PC-9 (cell line): ENCODE measurements at regions of chr7 and their contacts with region 1.

Region 1: DNA sequence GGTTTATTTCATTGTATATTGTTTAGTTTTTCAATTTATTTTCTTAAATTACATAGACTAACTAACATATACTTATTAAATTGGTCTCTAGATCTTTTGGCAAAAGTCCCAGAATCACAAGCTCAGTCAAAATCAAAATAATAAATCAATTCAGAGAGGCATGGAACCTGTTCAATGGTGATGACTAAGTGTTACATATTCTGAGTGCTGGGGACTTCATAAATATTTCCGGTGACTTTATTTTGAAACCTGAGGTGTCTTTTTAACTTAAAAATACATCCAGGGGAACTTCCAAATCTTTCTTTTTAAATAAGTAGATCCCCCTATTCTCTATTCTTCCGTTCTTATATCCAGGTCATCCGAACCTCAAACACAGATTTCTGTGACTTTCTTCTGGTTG is 89.6 kb upstream of the ZNF804B start:
- DNase-seq: no peak
- H3K4me3 ChIP-seq: no peak overlapping the region
- H3K27ac ChIP-seq: no peak overlapping the region
- H3K4me1 ChIP-seq: peaks cover 11% of the 10 kb centered on the region
- H3K27me3 ChIP-seq: no peaks in the 10 kb centered on the region
- CTCF ChIP-seq: no peak

Region 2: DNA sequence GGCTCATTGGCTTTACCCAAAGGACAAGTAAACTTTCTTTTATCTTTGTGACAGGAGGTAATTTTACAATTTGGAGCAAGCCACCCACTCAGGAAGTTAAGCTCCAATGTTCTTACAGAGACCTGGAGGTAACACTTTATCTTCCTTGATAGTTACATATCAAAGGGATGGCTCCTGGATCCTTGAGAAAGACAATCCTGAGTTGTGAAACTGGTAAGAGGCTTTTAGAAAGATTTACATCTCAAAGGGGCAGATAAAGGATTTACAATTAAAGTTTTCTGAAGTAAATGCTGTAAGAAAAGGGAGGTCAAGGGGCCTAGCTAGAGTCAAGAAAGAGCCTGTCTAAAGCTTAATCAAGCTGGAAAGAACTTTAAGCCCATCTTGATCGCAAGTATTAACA is 34.8 kb before region 1 on chr7:
- CTCF ChIA-PET with region 1: no interaction called
- POLR2A ChIA-PET with region 1: no interaction called
- intact Hi-C with region 1: loop called (anchors 5 kb)
- DNase-seq: no peak
- H3K4me3 ChIP-seq: no peak overlapping the region
- H3K27ac ChIP-seq: no peak overlapping the region
- H3K4me1 ChIP-seq: no peaks in the 10 kb centered on the region
- H3K27me3 ChIP-seq: no peaks in the 10 kb centered on the region
- CTCF ChIP-seq: no peak